Activated CD4-positive, alpha-beta memory T cell treated with anti-CD3 and anti-CD28 coated beads for 36 hours (primary cell): ENCODE measurements at regions of chr5 and their contacts with region 1.

Region 1: DNA sequence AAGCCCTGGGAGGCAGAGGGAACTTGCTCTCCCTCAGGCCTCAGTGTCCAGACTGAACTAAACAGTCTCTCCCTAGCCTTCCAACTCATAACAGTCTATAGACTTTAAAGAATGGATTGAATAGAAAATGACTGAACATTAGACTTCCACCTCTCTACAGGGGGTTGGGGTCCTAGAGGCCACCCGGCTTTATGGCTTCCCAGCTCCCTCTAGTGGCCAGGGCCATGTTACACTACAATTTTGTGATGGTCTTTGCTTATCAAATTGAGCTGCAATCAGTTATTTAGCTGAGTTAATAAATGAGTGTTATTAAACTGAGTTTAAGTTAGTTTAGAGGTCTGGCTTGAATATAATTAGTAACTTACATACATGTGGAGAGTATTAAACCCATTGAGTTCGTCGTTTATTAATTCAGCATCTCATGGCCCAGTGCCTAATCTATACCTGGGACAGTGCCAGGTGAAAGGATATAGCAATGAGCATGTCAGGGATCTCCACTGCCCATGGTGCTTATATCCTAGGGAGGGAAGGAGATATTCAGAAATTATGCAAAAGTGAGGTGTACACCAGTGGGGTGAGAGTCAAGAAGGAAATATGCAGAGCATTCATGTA is 105.2 kb downstream of the SH3TC2 start:
- DNase-seq: peak; percentile 60
- H3K4me3 Mint-ChIP-seq: no peak overlapping the region
- H3K27ac Mint-ChIP-seq: no peak overlapping the region
- H3K4me1 Mint-ChIP-seq: no peaks in the 10 kb centered on the region
- H3K27me3 Mint-ChIP-seq: peaks cover 2% of the 10 kb centered on the region

Region 2: DNA sequence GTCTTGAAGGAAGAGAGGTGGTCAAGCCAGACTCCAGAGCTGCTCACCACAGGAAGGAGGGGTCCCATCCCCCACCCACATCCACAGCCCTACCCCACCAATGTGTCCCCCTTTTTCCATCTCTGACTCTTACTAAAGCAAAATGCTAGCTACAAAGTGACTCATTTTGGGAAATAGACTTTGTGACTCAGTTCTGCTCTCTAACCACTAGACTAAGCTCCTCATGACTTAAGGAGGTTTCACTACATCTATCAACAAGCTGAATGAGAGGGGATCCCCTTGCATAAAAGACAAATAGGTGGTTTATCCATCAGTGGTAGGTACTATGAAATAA is 166.4 kb before region 1 on chr5:
- CTCF ChIA-PET with region 1: interaction called, 14 read pairs
- POLR2A ChIA-PET with region 1: no interaction called
- intact Hi-C with region 1: no loop called
- DNase-seq: peak; percentile 77
- H3K4me3 Mint-ChIP-seq: no peak overlapping the region
- H3K27ac Mint-ChIP-seq: no peak overlapping the region
- H3K4me1 Mint-ChIP-seq: peaks cover 24% of the 10 kb centered on the region
- H3K27me3 Mint-ChIP-seq: peaks cover 33% of the 10 kb centered on the region

Region 3: GRCh38 chr5:148820461-148821395 is 137.0 kb before region 1 on chr5:
- CTCF ChIA-PET with region 1: interaction called, 51 read pairs
- POLR2A ChIA-PET with region 1: no interaction called
- intact Hi-C with region 1: loop called (anchors 2 kb)
- DNase-seq: no peak
- H3K4me3 Mint-ChIP-seq: no peak overlapping the region
- H3K27ac Mint-ChIP-seq: no peak overlapping the region
- H3K4me1 Mint-ChIP-seq: peaks cover 6% of the 10 kb centered on the region
- H3K27me3 Mint-ChIP-seq: peaks cover 5% of the 10 kb centered on the region

Region 4: DNA sequence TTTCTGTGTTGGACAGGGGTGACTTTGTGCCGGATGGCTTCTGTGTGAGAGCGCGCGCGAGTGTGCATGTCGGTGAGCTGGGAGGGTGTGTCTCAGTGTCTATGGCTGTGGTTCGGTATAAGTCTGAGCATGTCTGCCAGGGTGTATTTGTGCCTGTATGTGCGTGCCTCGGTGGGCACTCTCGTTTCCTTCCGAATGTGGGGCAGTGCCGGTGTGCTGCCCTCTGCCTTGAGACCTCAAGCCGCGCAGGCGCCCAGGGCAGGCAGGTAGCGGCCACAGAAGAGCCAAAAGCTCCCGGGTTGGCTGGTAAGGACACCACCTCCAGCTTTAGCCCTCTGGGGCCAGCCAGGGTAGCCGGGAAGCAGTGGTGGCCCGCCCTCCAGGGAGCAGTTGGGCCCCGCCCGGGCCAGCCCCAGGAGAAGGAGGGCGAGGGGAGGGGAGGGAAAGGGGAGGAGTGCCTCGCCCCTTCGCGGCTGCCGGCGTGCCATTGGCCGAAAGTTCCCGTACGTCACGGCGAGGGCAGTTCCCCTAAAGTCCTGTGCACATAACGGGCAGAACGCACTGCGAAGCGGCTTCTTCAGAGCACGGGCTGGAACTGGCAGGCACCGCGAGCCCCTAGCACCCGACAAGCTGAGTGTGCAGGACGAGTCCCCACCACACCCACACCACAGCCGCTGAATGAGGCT is 131.5 kb before region 1 on chr5 and contains the start of gene ADRB2:
- CTCF ChIA-PET with region 1: interaction called, 51 read pairs
- POLR2A ChIA-PET with region 1: no interaction called
- intact Hi-C with region 1: loop called (anchors 2 kb)
- DNase-seq: peak; percentile 93
- H3K4me3 Mint-ChIP-seq: peak within 1 kb of the TSS; percentile 80
- H3K27ac Mint-ChIP-seq: peak within 1 kb of the TSS; percentile 46
- H3K4me1 Mint-ChIP-seq: peaks cover 35% of the 10 kb centered on the region
- H3K27me3 Mint-ChIP-seq: peaks cover 7% of the 10 kb centered on the region
- total RNA-seq, gene ADRB2: 0.36 to 0.52 TPM

Region 5: DNA sequence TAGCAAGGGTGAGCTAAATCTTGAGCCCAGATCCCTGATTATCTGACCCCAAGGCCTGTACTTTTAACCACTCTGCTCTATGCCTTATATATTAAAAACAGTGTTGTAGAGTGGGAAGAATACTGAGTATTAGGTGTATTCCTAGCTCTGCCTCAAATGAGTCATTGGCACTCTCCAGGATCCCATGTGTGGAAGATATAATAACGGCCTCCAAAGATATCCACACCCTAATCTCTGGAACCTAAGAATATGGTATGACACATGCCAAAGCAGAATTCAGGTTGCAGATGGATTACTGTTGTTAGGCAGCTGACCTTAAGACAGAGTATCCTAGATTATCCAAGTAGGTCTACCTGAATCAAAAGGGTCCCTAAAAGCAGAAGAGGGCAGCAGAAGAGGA is 20.5 kb before region 1 on chr5:
- CTCF ChIA-PET with region 1: interaction called, 12 read pairs
- POLR2A ChIA-PET with region 1: no interaction called
- intact Hi-C with region 1: no loop called
- DNase-seq: no peak
- H3K4me3 Mint-ChIP-seq: no peak overlapping the region
- H3K27ac Mint-ChIP-seq: no peak overlapping the region
- H3K4me1 Mint-ChIP-seq: no peaks in the 10 kb centered on the region
- H3K27me3 Mint-ChIP-seq: peaks cover 12% of the 10 kb centered on the region

Region 6: GRCh38 chr5:148979104-148979723 is 21.5 kb after region 1 on chr5:
- CTCF ChIA-PET with region 1: interaction called, 13 read pairs
- POLR2A ChIA-PET with region 1: no interaction called
- intact Hi-C with region 1: no loop called
- DNase-seq: no peak
- H3K4me3 Mint-ChIP-seq: no peak overlapping the region
- H3K27ac Mint-ChIP-seq: no peak overlapping the region
- H3K4me1 Mint-ChIP-seq: no peaks in the 10 kb centered on the region
- H3K27me3 Mint-ChIP-seq: peaks cover 3% of the 10 kb centered on the region

Region 7: DNA sequence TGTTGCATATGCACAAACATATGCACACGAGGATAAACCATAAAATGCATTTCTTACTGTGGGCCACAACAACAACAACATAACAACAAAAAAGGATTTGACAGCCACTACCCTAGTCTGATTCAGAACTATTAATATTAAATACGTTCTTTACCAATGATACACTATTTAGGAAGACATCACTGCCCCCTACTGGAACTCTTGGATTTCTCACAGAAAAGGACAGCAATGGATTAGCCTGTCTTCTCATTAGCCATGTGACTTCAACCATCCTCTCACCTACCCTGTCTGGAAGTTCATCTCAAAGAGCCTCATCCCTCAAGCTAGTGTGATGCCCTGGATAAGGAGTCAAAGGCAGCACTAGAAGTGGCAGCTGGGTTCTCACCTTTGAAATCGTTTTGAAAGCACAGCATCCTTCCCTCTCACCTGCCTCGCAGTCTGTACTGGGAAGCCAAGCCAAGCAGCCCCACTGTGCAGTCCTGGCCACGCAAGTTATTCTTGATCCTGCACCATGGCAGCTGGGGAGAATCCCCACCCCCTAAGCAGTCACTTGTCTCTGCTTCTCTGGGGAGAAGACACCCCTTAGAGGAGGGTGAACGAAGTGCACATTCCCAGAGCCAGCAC is 40.6 kb after region 1 on chr5:
- CTCF ChIA-PET with region 1: interaction called, 18 read pairs
- POLR2A ChIA-PET with region 1: no interaction called
- intact Hi-C with region 1: no loop called
- DNase-seq: no peak
- H3K4me3 Mint-ChIP-seq: no peak overlapping the region
- H3K27ac Mint-ChIP-seq: no peak overlapping the region
- H3K4me1 Mint-ChIP-seq: no peaks in the 10 kb centered on the region
- H3K27me3 Mint-ChIP-seq: peaks cover 10% of the 10 kb centered on the region

Region 8: DNA sequence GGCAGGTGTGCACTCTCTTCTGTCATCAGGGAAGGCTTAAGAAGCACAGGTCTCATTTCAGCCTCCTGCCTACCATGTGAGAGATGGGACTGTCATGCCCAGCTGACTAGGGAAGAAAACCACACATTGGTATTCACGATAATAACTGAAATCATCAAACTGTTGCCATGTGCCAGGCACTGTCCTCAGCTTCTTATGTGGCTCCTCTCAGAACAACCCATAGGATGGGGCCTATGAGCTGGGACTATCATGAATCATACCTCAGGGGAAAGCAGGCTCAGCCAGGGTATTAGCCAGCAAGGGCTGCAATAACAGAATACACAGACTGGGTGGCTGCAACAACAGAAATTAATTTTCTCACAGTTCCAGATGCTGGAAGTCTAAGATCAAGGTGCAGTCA is 317.2 kb after region 1 on chr5:
- CTCF ChIA-PET with region 1: no interaction called
- POLR2A ChIA-PET with region 1: no interaction called
- intact Hi-C with region 1: no loop called
- DNase-seq: no peak
- H3K4me3 Mint-ChIP-seq: no peak overlapping the region
- H3K27ac Mint-ChIP-seq: no peak overlapping the region
- H3K4me1 Mint-ChIP-seq: peaks cover 7% of the 10 kb centered on the region
- H3K27me3 Mint-ChIP-seq: peaks cover 48% of the 10 kb centered on the region